ENCODE measurements at regions of chr4 and their contacts with region 1.

Region 1: GRCh38 chr4:1614854-1615634 is 69.1 kb downstream of the FAM53A start:
- DNase-seq: no peak
- ATAC-seq: no peak
- H3K4me3 ChIP-seq: no peak overlapping the region
- H3K27ac ChIP-seq: no peak overlapping the region
- H3K4me1 ChIP-seq: peaks cover 0 to 3% (median 0%) of the 10 kb centered on the region in 12 donors
- H3K27me3 ChIP-seq: no peaks in the 10 kb centered on the region
- CTCF ChIP-seq: no peak
- POLR2A ChIP-seq: no peak

Region 2: DNA sequence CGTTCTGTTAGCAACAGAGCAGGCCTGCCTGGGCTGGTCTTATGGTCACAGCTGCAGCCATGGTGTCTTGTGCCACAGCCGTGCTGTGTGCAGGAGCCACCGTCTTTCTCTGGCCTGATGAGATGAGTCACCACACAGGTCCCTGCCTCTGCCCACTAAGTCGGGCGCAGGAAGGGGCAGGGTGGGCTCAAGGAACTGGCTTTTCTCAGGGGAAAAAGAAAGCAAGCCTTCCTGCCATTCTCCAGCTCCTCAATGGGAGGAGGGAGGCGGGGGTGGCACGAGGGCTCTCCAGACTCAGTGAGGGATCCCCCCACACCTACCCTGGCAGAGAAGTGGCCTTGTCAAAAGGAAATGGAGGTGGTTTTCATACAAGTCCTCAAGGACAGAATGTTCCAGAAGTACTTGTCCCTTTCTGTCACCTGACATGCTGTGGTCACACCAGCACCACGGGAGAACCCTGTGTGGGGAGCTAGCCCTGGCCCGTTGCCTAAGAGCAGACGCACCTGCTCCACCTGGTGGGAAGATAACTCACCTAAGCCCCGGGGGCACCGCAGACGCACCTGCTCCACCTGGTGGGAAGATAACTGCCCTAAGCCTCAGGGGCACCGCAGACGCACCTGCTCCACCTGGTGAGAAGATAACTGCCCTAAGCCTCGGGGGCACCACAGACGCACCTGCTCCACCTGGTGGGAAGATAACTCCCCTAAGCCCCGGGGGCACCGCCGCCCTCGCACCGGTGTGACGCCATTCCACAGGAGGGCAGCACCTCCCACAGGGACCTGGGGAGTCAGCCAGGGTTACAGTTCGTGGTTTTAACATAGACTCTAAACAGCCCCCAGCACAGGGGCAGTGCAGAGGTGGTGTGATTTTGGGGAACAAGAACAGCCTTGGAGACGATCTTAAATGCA is 249.5 kb before region 1 on chr4:
- intact Hi-C with region 1: loop called in 1 of 10 experiments (anchors 5 kb)
- DNase-seq: peak in 3 of 5 donors; percentile 15 to 47 (median 18)
- ATAC-seq: no peak
- H3K4me3 ChIP-seq: no peak overlapping the region
- H3K27ac ChIP-seq: no peak overlapping the region
- H3K4me1 ChIP-seq: no peaks in the 10 kb centered on the region
- H3K27me3 ChIP-seq: no peaks in the 10 kb centered on the region
- CTCF ChIP-seq: peak in 1 of 12 donors; percentile 7
- POLR2A ChIP-seq: no peak

Region 3: GRCh38 chr4:1655081-1655480 is 40.0 kb after region 1 on chr4:
- intact Hi-C with region 1: loop called in 1 of 10 experiments (anchors 5 kb)
- DNase-seq: peak in 1 of 5 donors; percentile 21
- ATAC-seq: peak in 1 of 4 donors; percentile 14
- H3K4me3 ChIP-seq: no peak overlapping the region
- H3K27ac ChIP-seq: no peak overlapping the region
- H3K4me1 ChIP-seq: no peaks in the 10 kb centered on the region
- H3K27me3 ChIP-seq: no peaks in the 10 kb centered on the region
- CTCF ChIP-seq: no peak
- POLR2A ChIP-seq: no peak

Region 4: DNA sequence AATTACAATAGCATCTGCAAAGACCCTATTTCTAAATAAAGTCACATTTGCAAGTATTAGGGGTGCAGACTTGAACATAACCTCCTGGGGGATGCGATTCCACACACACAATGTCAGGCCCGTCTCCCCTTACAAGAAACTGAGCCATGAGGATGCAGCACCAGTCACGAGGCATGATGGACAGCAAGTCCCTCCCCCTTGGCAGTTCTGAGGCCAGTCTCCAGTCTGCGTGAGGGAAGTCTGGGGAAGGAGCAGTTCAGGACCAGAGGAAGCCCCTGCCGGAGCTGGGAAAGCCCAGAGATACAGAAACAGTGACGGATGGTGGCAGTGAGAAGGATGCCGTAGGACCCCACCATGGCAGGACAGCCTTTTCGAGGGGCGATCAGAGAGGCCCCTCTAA is 59.6 kb after region 1 on chr4:
- intact Hi-C with region 1: no loop called
- DNase-seq: no peak
- ATAC-seq: no peak
- H3K4me3 ChIP-seq: no peak overlapping the region
- H3K27ac ChIP-seq: no peak overlapping the region
- H3K4me1 ChIP-seq: no peaks in the 10 kb centered on the region
- H3K27me3 ChIP-seq: no peaks in the 10 kb centered on the region
- CTCF ChIP-seq: no peak
- POLR2A ChIP-seq: no peak

Measured in heart left ventricle (tissue), 16 donors.